Activated T-helper 2 cell treated with anti-CD3 and anti-CD28 coated beads, Interferon-gamma antibody, Interleukin-2, Interleukin-4, amounts not matched to agents 10 μg/mL and 5 μg/mL and 100 μg/mL, durations not matched to agents 14 hours and 24 hours and 36 hours (primary cell): ENCODE measurements at regions of chr6 and their contacts with region 1.

Region 1: DNA sequence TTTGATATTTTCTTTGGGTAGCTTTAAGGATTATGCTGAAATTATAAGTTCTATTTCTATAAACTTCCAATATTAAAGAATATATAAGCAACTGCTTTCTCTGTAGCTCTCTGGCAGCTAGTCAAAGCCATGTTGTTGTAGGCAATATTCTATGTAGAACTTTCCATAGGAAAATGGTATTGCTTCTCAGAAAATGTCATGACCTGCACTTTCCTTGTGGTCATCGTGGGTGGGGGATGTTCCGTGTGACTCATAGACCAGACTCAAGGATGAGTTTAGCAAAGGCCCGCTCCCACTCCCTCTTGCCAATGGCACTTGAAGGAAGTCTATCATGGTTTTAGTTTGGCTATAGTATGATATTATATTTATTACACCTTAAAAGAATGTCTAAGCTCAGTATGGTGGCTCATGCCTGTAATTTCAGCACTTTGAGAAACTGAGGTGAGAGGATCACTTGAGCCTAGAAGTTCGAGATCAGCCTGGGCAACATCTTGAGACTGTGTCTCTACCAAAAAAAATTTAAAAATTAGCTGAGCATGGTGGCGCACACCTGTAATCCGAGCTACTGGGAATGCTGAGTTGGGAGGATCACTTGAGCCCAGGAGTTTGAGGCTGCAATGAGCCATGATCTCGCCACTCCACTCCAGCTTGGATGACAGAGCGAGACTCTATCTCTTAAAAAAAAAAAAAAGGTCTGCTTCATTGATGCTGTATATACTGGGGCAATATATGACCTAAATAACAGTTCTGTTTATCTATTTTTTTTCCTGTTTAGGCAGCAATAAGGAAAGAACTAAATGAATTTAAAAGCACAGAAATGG is 36.6 kb upstream of the LTV1 start:
- DNase-seq: peak; percentile 19
- H3K4me3 Mint-ChIP-seq: no peak overlapping the region
- H3K27ac Mint-ChIP-seq: peak overlapping the region; percentile 84
- H3K4me1 Mint-ChIP-seq: peaks cover 46% of the 10 kb centered on the region
- H3K27me3 Mint-ChIP-seq: no peaks in the 10 kb centered on the region

Region 2: DNA sequence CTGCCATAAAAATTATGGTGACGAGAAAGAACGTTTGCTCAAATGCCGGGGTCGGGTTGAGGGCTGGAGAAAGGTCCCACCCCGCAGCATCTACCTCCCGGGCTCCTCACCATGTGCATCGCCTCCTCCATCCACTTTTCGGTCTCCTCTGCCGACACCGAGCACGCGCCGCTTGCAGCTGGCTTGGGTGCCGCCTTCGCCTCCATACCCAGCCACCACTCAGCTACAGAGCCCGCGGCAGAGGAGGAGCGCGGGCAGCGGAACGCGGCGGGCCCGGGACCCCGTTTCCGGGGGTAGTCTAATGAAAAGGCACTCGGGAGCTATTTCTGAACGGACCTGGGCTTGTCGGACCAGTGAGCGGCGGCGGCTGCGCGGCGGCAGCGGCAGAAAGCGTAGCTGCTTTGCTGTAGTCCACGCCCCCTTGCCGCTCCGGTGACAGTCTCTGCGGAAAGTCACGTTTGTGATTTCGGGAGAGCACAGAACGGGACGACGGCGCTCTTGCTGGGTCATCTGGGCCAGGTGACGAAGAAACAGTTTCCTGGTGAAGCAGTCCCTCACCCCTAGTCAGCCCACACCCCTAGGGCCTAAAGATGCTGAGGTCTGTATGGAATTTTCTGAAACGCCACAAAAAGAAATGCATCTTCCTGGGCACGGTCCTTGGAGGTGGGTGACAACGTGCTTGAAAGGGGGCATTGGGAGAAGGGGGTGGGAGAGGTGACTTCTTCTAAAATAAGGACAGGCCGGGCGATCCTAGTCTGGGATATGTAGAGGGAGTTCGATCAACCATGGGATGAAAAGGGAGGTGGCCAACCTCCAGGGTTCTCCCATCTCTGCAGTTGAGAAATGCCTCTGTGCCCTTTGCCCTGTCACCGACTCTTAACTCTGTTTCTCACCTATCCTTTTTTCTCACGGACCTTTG is 355.8 kb before region 1 on chr6 and contains the starts of genes ADAT2 and PEX3:
- intact Hi-C with region 1: loop called (anchors 5 kb)
- DNase-seq: peak; percentile 93
- H3K4me3 Mint-ChIP-seq: peak within 1 kb of the TSS; percentile 94
- H3K27ac Mint-ChIP-seq: peak within 1 kb of the TSS; percentile 97
- H3K4me1 Mint-ChIP-seq: peaks cover 36% of the 10 kb centered on the region
- H3K27me3 Mint-ChIP-seq: no peaks in the 10 kb centered on the region
- total RNA-seq, gene ADAT2: 35.7 and 37.6 TPM in 2 replicates
- total RNA-seq, gene PEX3: 21.4 and 23.6 TPM in 2 replicates

Region 3: GRCh38 chr6:143629104-143630080 is 177.1 kb before region 1 on chr6:
- intact Hi-C with region 1: loop called (anchors 1 kb)
- DNase-seq: no peak
- H3K4me3 Mint-ChIP-seq: peak overlapping the region; percentile 13
- H3K27ac Mint-ChIP-seq: peak overlapping the region; percentile 28
- H3K4me1 Mint-ChIP-seq: peaks cover 30% of the 10 kb centered on the region
- H3K27me3 Mint-ChIP-seq: no peaks in the 10 kb centered on the region

Region 4: GRCh38 chr6:143718472-143718871 is 88.0 kb before region 1 on chr6:
- intact Hi-C with region 1: no loop called
- DNase-seq: no peak
- H3K4me3 Mint-ChIP-seq: no peak overlapping the region
- H3K27ac Mint-ChIP-seq: no peak overlapping the region
- H3K4me1 Mint-ChIP-seq: no peaks in the 10 kb centered on the region
- H3K27me3 Mint-ChIP-seq: no peaks in the 10 kb centered on the region

Region 5: GRCh38 chr6:143842902-143843676 is 36.6 kb after region 1 on chr6 and contains the start of gene LTV1:
- intact Hi-C with region 1: loop called (anchors 1 kb)
- DNase-seq: peak; percentile 90
- H3K4me3 Mint-ChIP-seq: peak within 1 kb of the TSS; percentile 97
- H3K27ac Mint-ChIP-seq: peak within 1 kb of the TSS; percentile 96
- H3K4me1 Mint-ChIP-seq: peaks cover 17% of the 10 kb centered on the region
- H3K27me3 Mint-ChIP-seq: no peaks in the 10 kb centered on the region
- total RNA-seq, gene LTV1: 41.2 and 44.7 TPM in 2 replicates

Region 6: GRCh38 chr6:144055121-144055931 is 248.8 kb after region 1 on chr6:
- intact Hi-C with region 1: loop called (anchors 2 kb)
- DNase-seq: peak; percentile 36
- H3K4me3 Mint-ChIP-seq: peak overlapping the region; percentile 75
- H3K27ac Mint-ChIP-seq: peak overlapping the region; percentile 94
- H3K4me1 Mint-ChIP-seq: peaks cover 40% of the 10 kb centered on the region
- H3K27me3 Mint-ChIP-seq: no peaks in the 10 kb centered on the region

Region 7: DNA sequence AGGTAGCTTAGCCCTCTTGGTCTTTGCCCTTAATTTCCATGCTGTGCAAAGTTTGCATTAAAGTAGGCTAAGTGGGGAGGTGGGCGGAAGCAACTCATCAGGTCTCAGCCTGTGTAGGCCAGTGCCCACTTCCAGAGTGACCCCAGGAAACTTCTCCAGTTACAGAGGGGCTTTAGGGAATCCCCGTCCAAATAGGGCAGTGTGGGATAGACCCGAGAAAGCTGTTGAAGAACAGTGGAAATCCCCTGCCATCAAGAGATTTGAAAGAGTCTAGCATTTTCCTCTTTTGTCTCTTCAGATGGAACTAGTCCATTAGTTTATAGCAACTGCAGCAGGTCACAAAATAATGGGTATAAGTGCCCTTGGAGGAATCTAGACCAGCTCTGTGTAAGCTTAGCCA is 268.7 kb after region 1 on chr6:
- intact Hi-C with region 1: no loop called
- DNase-seq: no peak
- H3K4me3 Mint-ChIP-seq: no peak overlapping the region
- H3K27ac Mint-ChIP-seq: no peak overlapping the region
- H3K4me1 Mint-ChIP-seq: peaks cover 4% of the 10 kb centered on the region
- H3K27me3 Mint-ChIP-seq: peaks cover 5% of the 10 kb centered on the region